Panc1 (cell line): ENCODE measurements at regions of chr7 and their contacts with region 1.

Region 1: GRCh38 chr7:143240291-143241168 is 18.7 kb downstream of the TAS2R40 start:
- DNase-seq: no peak
- ATAC-seq: peak; percentile 96
- H3K4me3 ChIP-seq: no peak overlapping the region
- H3K27ac ChIP-seq: no peak overlapping the region
- H3K4me1 ChIP-seq: no peaks in the 10 kb centered on the region
- H3K27me3 ChIP-seq: peaks cover 6% of the 10 kb centered on the region; the same call in 1 of the 2 replicates
- CTCF ChIP-seq: peak; percentile 89

Region 2: GRCh38 chr7:143214789-143215679 is 25.5 kb before region 1 on chr7:
- CTCF ChIA-PET with region 1: interaction called, 11 read pairs
- POLR2A ChIA-PET with region 1: no interaction called
- in situ Hi-C with region 1: no loop called
- intact Hi-C with region 1: no loop called
- DNase-seq: peak; percentile 89
- ATAC-seq: peak; percentile 88
- H3K4me3 ChIP-seq: no peak overlapping the region
- H3K27ac ChIP-seq: no peak overlapping the region
- H3K4me1 ChIP-seq: no peaks in the 10 kb centered on the region
- H3K27me3 ChIP-seq: peaks cover 3% of the 10 kb centered on the region; the same call in 1 of the 2 replicates
- CTCF ChIP-seq: peak; percentile 97

Region 3: GRCh38 chr7:143305423-143306070 is 65.0 kb after region 1 on chr7:
- CTCF ChIA-PET with region 1: no interaction called
- POLR2A ChIA-PET with region 1: no interaction called
- in situ Hi-C with region 1: no loop called
- intact Hi-C with region 1: loop called (anchors 2 kb)
- DNase-seq: no peak
- ATAC-seq: peak; percentile 89
- H3K4me3 ChIP-seq: no peak overlapping the region
- H3K27ac ChIP-seq: no peak overlapping the region
- H3K4me1 ChIP-seq: no peaks in the 10 kb centered on the region
- H3K27me3 ChIP-seq: no peaks in the 10 kb centered on the region
- CTCF ChIP-seq: peak; percentile 87

Region 4: DNA sequence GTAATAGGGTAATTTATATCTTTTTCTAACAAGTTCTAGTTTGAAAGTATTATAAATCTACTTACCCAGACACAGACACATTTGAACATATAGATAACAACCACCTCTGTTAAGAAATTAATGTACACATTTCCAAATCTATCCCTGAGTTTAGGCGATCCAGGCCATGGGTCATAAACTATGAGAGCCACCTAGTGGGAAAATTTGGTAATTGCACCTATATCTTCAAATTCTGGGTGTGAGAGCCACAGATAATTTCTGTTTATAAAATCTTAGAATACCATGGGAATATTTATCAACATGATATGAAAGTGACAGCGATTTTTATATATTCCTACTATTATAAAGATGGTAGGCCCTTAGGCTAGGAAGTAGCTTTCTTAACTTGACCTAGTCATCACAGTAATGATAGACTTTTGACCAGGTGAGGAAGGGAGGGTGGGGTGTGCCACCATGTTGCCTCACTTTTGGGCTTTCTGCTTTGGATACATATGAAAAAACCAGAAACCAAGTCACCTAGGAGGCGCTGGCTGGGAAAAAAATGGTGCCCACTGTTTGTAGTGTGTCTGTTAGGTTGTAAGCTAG is 176.1 kb after region 1 on chr7:
- CTCF ChIA-PET with region 1: interaction called, 3 read pairs
- POLR2A ChIA-PET with region 1: no interaction called
- in situ Hi-C with region 1: no loop called
- intact Hi-C with region 1: loop called (anchors 1 kb)
- DNase-seq: no peak
- ATAC-seq: peak; percentile 79; the same call in 1 of the 2 replicates
- H3K4me3 ChIP-seq: no peak overlapping the region
- H3K27ac ChIP-seq: no peak overlapping the region
- H3K4me1 ChIP-seq: no peaks in the 10 kb centered on the region
- H3K27me3 ChIP-seq: no peaks in the 10 kb centered on the region
- CTCF ChIP-seq: peak; percentile 78